ENCODE measurements at regions of chr5 and their contacts with region 1.

Region 1: DNA sequence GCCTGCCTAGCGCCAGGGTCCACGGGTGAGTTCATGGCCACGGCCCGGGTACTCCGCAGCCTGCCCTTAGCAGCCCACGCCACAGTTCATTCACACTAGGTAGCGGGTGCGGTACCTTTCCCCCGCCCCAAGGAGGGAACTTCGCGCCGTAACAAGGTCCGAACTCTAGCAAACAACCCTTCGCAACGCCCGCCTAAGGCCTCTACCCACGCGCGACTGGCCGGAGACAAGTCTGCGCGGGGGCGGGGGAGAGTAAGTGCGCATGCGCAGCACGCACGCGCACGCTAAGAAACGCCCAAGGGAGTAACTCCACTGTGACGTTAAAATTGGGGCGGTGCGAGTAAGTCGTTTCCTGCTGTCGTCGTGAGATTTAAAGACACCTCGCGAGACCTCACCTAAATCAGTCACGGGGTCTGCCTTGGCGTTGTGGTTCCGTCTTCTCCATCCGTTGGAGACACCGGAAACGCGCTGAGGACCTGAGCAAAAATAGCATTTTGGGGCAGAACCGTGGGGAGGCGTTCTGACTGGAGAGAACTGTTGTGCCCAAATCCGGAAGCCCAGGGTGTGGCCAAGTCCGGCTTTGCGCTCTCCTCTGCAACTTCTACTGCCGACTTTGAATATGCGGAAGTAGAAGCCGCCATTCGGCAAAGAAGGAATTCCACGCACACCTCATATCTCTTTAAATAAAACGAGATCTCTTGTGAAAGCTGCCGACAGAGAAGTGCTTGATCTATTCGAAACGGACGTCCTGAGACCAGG is at the start of gene RAPGEF6:
- DNase-seq: peak; percentile 98
- total RNA-seq, gene RAPGEF6: 15.6 TPM

Region 2: DNA sequence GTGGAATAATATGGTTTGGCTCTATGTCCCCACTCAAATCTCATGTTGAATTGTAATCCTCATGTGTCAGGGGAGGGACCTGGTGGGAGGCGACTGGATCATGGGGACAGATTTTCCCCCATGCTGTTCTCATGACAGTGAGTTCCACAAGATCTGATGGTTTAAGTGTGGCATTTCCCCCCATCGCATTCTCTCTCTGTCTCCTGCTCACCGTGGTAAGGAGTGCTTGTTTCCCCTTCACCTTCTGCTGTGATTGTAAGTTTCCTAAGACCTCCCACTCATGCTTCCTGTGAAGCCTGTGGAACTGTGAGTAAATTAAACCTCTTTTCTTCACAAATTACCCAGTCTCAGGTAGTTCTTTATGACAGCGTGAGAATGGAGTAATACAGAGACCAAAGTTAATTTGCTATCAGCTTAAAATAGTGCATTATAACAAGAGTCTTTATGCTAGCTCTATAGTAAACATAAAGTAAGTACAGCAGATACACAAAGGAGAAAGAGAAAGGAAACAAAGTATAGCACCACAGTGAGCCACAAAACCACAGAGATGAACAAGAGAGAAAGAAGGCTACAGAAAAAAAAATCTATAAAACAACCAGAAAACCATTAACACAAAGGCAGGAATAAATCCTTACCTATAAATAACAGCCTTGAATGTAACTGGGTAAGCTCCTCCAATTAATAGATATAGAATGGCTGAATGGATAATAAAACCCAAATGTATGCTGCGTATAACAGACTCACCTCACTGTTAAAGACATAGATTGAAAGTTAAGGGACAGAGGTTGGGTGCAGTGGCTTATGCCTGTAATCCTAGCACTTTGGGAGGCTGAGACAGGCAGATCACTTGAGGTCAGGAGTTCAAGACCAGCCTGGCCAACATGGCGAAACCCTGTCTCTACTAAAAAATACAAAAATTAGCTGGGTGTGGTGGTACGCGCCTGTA is 39.8 kb before region 1 on chr5:
- intact Hi-C with region 1: loop called (anchors 5 kb)
- DNase-seq: no peak

Region 3: GRCh38 chr5:131671994-131672655 is 37.0 kb after region 1 on chr5:
- intact Hi-C with region 1: loop called (anchors 5 kb)
- DNase-seq: no peak

Region 4: GRCh38 chr5:131854134-131854533 is 219.0 kb after region 1 on chr5:
- intact Hi-C with region 1: no loop called
- DNase-seq: no peak

Measured in cardiac septum (tissue), 1 donor.